Common myeloid progenitor, CD34-positive (primary cell): ENCODE measurements at regions of chr10 and their contacts with region 1.

Region 1: DNA sequence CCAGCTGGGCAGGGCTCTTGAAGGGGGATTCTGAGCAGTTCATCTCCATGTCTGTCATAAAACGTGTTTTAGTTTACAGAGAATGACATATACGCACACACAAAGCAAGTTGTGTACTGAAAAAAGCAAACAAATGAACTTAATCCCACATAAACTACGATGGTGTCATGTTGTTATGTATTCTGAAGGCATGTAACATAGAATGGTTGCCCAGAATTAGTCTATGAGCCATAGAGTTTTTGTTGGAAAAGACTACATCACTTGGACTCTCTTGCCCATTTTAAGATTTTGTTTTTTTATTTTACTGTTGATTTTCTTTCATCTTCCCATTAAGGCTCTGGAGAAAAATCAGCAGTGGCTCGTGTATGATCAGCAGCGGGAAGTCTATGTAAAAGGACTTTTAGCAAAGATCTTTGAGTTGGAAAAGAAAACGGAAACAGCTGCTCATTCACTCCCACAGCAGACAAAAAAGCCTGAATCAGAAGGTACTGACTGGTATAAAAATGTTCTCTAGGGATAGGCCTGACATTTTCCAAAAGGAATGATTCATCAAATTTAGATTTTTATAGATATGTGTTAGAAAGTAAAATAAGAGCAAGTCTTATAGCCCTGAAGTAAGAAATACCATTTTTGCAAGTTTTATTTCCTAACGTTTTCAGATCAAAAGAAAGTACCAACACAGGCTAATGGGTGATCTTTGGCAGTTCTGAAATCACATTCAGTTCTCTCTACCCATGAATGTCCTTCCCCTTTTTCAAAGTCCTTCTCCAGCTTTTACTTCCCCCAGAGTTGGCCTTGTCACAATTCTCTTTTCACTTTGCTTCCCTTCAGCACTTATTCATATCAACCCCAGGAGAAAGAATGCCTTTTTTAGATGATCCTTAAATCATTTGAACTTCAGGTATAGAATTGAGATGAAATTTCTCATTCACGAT is 18.9 kb downstream of the CEP55 start:
- DNase-seq: peak in 2 of 3 donors; percentile 43 to 55
- H3K4me3 ChIP-seq: no peak overlapping the region
- H3K27ac ChIP-seq: no peak overlapping the region
- H3K4me1 ChIP-seq: peaks cover 0 to 2% (median 1%) of the 10 kb centered on the region in 4 experiments
- H3K27me3 ChIP-seq: no peaks in the 10 kb centered on the region

Region 2: DNA sequence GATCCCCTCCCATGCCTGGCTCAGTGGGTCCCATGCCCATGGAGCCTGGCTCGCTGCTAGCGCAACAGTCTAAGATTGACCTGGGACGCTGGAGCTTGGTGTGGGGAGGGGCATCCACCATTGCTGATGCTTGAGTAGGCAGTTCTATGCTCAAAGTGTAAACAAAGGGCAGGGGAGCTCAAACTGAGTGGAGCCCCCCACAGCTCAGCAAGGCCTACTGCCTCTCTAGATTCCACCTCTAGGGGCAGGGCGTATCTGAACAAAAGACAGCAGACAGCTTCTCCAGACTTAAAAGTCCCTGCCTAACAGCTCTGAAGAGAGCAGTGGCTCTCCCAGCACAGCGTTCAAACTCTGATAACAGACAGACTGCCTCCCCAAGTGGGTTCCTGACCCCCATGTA is 20.0 kb after region 1 on chr10:
- CTCF ChIA-PET with region 1: interaction called, 11 read pairs
- POLR2A ChIA-PET with region 1: no interaction called
- DNase-seq: no peak
- H3K4me3 ChIP-seq: no peak overlapping the region
- H3K27ac ChIP-seq: no peak overlapping the region
- H3K4me1 ChIP-seq: no peaks in the 10 kb centered on the region
- H3K27me3 ChIP-seq: no peaks in the 10 kb centered on the region